ENCODE measurements at regions of chr2 and their contacts with region 1.

Region 1: GRCh38 chr2:48607307-48608014 is 10.2 kb upstream of the GTF2A1L start:
- DNase-seq: peak in 1 of 2 experiments; percentile 29
- H3K4me3 ChIP-seq: no peak overlapping the region
- H3K27ac ChIP-seq: no peak overlapping the region
- H3K4me1 ChIP-seq: peaks cover 6% of the 10 kb centered on the region; the same call in 1 of the 2 replicates
- H3K27me3 ChIP-seq: no peaks in the 10 kb centered on the region
- CTCF ChIP-seq: no peak

Region 2: DNA sequence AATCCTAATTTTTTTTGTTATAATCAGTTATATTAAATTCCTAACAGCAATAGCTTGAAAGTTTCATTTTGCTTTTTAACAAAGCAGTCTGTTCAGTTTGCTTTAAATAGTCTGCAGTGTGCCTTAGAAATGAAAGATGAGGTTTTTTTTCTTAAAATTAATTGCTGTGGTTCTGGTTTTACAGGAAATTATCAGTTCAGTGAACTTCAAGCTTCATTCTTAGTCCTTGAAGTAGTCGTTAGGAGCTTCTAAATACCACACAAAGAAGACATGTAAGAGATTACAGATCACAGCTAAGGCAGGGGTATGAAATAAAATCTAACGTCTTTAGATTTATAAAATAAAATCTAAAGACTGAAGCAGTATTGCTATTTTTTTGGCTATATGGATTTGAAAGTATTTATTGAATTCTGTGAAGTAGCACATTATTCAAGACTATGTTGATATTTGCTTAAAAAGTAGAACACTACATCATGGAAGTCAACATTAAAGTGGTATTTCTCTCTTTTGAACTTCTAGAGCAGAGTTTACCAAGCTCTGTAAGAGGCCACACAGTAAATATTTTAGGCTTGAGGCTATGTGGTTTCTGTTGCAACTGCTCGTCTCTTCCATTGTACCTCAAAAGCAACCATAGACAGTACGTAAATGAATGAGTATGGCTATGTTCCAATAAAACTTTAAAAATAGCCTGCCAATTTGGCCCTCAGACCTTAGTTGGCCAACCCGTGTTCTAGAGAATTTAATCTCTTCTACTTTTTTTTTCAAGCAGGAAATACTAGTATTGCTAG is 159.0 kb before region 1 on chr2:
- CTCF ChIA-PET with region 1: no interaction called
- POLR2A ChIA-PET with region 1: no interaction called
- intact Hi-C with region 1: no loop called
- DNase-seq: peak; percentile 27 to 93
- H3K4me3 ChIP-seq: no peak overlapping the region
- H3K27ac ChIP-seq: peak overlapping the region; percentile 39
- H3K4me1 ChIP-seq: peaks cover 56% of the 10 kb centered on the region
- H3K27me3 ChIP-seq: no peaks in the 10 kb centered on the region
- CTCF ChIP-seq: no peak

Region 3: GRCh38 chr2:48991415-48992131 is 384.1 kb after region 1 on chr2:
- CTCF ChIA-PET with region 1: no interaction called
- POLR2A ChIA-PET with region 1: no interaction called
- intact Hi-C with region 1: no loop called
- DNase-seq: no peak
- H3K4me3 ChIP-seq: no peak overlapping the region
- H3K27ac ChIP-seq: no peak overlapping the region
- H3K4me1 ChIP-seq: no peaks in the 10 kb centered on the region
- H3K27me3 ChIP-seq: no peaks in the 10 kb centered on the region
- CTCF ChIP-seq: no peak

Region 4: DNA sequence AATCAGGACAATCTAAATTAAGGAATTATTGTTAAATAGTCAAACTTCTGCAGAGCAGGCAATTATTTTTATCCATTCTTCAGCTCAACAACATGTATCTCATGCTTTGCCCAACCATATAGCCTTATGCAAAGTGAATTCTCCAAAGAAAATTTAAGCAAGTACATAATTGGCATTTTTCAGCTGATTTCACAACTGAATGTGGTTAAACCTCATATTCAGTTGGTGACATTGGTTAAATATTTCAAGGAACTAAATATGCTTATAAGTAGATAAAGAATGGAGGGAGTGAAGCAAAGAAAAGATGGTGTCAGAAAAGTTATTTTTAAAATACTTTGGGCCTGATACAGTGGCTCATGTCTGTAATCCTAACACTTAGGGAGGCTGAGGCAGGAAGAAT is 1608.3 kb after region 1 on chr2:
- CTCF ChIA-PET with region 1: interaction called, 14 read pairs
- POLR2A ChIA-PET with region 1: no interaction called
- intact Hi-C with region 1: no loop called
- DNase-seq: no peak
- H3K4me3 ChIP-seq: no peak overlapping the region
- H3K27ac ChIP-seq: no peak overlapping the region
- H3K4me1 ChIP-seq: no peaks in the 10 kb centered on the region
- H3K27me3 ChIP-seq: 0 out of 2 replicates have a peak, but pooled peaks cover under 1% of the 10 kb centered on the region
- CTCF ChIP-seq: no peak